HEK293 (cell line): ENCODE measurements at regions of chr1 and their contacts with region 1.

Region 1: GRCh38 chr1:48817505-48818114 is 40.9 kb upstream of the BEND5 start:
- H3K4me3 ChIP-seq: no peak overlapping the region
- H3K27ac ChIP-seq: no peak overlapping the region
- H3K4me1 ChIP-seq: no peaks in the 10 kb centered on the region
- CTCF ChIP-seq: peak; percentile 55; the same call in 1 of the 2 replicates

Region 2: GRCh38 chr1:48677306-48678287 is 140.0 kb before region 1 on chr1:
- CTCF ChIA-PET with region 1: interaction called, 48 read pairs
- POLR2A ChIA-PET with region 1: no interaction called
- H3K4me3 ChIP-seq: no peak overlapping the region
- H3K27ac ChIP-seq: no peak overlapping the region
- H3K4me1 ChIP-seq: no peaks in the 10 kb centered on the region
- CTCF ChIP-seq: peak; percentile 61; the same call in 1 of the 2 replicates

Region 3: DNA sequence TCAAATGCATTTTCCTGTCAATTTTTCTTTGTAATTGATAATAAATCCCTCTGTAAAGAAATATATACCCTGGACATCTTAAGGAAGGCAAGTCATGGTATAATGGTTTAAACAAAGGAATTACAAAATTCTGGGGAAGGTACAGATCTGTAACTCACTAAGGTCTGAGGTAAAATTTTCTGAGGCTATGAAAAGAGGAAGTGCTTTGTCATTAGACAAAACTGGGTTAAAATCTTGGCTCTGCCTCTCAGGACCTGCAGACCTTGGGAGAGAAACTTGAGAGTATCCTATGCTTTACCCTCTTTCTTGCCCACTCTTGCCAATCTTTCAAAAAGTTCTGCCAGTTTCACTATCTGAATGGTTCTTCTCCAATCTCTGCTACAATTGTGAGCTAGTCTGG is 14.1 kb before region 1 on chr1:
- CTCF ChIA-PET with region 1: interaction called, 11 read pairs
- POLR2A ChIA-PET with region 1: no interaction called
- H3K4me3 ChIP-seq: no peak overlapping the region
- H3K27ac ChIP-seq: no peak overlapping the region
- H3K4me1 ChIP-seq: no peaks in the 10 kb centered on the region
- CTCF ChIP-seq: no peak

Region 4: GRCh38 chr1:48831120-48831978 is 13.7 kb after region 1 on chr1:
- CTCF ChIA-PET with region 1: interaction called, 10 read pairs
- POLR2A ChIA-PET with region 1: no interaction called
- H3K4me3 ChIP-seq: no peak overlapping the region
- H3K27ac ChIP-seq: no peak overlapping the region
- H3K4me1 ChIP-seq: peaks cover 4% of the 10 kb centered on the region; the same call in 1 of the 2 replicates
- CTCF ChIP-seq: no peak

Region 5: DNA sequence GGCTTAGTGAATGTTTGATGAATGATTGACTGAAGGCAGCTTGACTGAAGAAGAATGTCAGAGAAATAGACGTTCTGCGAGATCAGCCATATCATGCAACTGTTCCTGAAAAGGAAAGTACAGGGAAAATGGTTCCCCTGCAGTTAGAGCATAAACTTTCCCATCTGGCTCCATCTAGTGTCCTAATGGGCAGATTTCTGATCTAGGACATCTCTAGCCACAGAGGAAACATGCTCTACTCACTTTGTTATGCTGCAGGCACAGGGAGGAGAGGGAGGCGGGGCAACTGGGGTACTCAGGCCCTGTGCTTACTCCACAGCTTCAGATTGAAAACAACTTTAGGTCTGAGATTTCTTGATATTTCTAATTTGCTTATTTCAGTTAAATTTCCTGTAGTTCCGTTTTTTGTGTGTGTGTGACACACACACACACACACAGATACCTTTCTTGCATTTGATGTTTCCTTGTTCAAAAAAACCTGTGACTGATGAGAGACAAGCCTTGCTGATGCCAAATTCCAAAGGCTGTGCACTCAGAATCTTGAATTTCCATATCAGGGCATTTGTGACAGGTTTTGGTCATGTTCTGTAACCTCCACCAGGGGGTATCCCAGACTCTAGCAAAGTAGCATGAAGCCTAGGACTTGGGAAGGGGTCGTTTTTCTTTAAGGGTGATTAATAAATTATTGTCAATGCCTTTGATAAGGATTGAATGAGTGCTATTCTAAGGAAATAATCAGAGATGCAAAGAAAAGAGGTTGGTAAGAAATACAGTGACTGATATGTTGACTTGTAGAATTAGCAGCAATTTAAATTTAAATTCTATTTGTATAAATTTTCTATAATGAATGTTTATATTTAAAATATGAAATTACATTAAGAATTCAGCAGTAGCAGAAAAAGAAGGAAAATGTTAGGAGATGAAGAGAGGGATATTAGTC is 98.8 kb after region 1 on chr1:
- CTCF ChIA-PET with region 1: no interaction called
- POLR2A ChIA-PET with region 1: no interaction called
- H3K4me3 ChIP-seq: no peak overlapping the region
- H3K27ac ChIP-seq: no peak overlapping the region
- H3K4me1 ChIP-seq: no peaks in the 10 kb centered on the region
- CTCF ChIP-seq: 0 out of 2 replicates have a peak, but pooled peaks have one; percentile 46

Region 6: GRCh38 chr1:48999321-48999720 is 181.7 kb after region 1 on chr1:
- CTCF ChIA-PET with region 1: no interaction called
- POLR2A ChIA-PET with region 1: no interaction called
- H3K4me3 ChIP-seq: no peak overlapping the region
- H3K27ac ChIP-seq: no peak overlapping the region
- H3K4me1 ChIP-seq: no peaks in the 10 kb centered on the region
- CTCF ChIP-seq: no peak